A549 (cell line): ENCODE measurements at regions of chr3 and their contacts with region 1.

Region 1: GRCh38 chr3:146065573-146066006 is 95.4 kb downstream of the PLOD2 start:
- DNase-seq: peak in 1 of 2 experiments; percentile 73
- ATAC-seq: no peak
- H3K4me3 ChIP-seq: no peak overlapping the region
- H3K27ac ChIP-seq: no peak overlapping the region
- H3K4me1 ChIP-seq: peaks cover 29% of the 10 kb centered on the region
- CTCF ChIP-seq: peak; percentile 95
- EP300 ChIP-seq: no peak
- POLR2A ChIP-seq: no peak
- RAD21 ChIP-seq: peak; percentile 86 to 93

Region 2: DNA sequence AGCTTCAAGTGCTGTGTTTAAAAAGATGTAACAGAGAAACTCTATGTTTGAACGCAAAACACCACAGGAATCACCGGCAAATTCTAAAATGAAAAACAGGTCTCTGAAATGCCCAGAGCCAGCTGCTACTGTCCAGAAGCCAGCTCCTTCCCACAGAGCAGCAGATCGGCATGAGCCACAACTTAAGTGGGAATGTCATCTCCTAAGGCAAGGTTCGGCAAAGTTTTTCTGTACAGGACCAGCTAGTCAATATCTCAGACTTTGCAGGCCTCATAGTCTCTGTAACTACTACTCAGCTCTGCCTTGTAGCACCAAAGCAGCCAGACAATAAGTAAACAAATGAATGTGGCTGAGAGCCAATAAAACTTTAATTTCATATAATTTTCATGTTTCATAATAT is 90.5 kb after region 1 on chr3:
- CTCF ChIA-PET with region 1: interaction called, 34 read pairs
- POLR2A ChIA-PET with region 1: interaction called, 23 read pairs
- DNase-seq: no peak
- ATAC-seq: no peak
- H3K4me3 ChIP-seq: peak overlapping the region; percentile 90
- H3K27ac ChIP-seq: peak overlapping the region; percentile 45 to 72
- H3K4me1 ChIP-seq: peaks cover 74% of the 10 kb centered on the region
- CTCF ChIP-seq: no peak
- EP300 ChIP-seq: no peak
- POLR2A ChIP-seq: no peak
- RAD21 ChIP-seq: no peak

Region 3: DNA sequence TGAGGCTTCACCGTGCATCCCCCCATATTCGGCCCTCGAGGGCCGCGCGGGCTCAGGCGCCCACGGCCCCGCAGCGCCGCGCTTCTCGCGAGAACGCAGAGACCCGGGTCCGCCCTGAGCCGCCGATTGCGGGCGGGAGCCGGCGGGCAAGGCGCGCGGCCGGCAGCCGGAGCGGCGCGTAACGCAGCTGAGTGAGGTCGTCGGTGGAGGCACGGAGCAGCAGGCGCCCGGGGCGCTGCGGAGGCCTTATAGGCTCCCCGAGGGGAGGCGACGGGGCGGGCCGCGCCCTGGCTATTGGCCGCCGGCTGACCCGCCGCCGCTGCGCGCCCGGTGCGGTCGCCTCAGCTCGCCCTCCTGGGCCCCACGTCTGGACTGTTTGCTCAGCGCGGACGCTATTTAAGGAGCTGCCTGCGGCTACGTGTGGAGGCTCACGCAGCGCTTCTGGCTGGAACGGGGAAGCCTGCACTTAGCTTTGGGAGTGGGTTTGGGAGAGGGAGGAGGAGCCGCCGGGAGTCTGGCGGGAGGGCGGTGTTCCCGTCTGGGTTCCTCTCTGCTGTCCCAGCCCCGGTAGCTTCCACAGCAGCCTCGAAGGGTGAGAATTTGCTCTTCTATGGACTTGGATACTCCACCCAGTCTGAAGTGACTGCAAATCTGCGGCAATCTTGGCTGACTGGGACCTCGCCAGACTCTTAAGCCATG is 95.5 kb after region 1 on chr3 and contains the start of gene PLOD2:
- CTCF ChIA-PET with region 1: interaction called, 34 read pairs
- POLR2A ChIA-PET with region 1: interaction called, 23 read pairs
- DNase-seq: peak; percentile 56 to 89
- ATAC-seq: peak; percentile 75 to 76
- H3K4me3 ChIP-seq: peak within 1 kb of the TSS; percentile 90
- H3K27ac ChIP-seq: peak within 1 kb of the TSS; percentile 87 to 97
- H3K4me1 ChIP-seq: peaks cover 64% of the 10 kb centered on the region
- CTCF ChIP-seq: no peak; the same call in 2 of the 3 replicates
- EP300 ChIP-seq: peak in 1 of 2 experiments; percentile 20; a peak in 1 of 5 replicates
- POLR2A ChIP-seq: peak; percentile 86
- RAD21 ChIP-seq: no peak; a peak in 2 of 5 replicates
- polyA plus RNA-seq, gene PLOD2: 161 and 174 TPM in 2 replicates

Region 4: GRCh38 chr3:146166450-146167225 is 101.0 kb after region 1 on chr3:
- CTCF ChIA-PET with region 1: interaction called, 34 read pairs
- POLR2A ChIA-PET with region 1: interaction called, 3 read pairs
- DNase-seq: peak in 1 of 2 experiments; percentile 88
- ATAC-seq: peak; percentile 65
- H3K4me3 ChIP-seq: 0 out of 3 replicates have a peak overlapping the region, but pooled peaks have one; percentile 10
- H3K27ac ChIP-seq: peak overlapping the region; percentile 87 to 97
- H3K4me1 ChIP-seq: peaks cover 61% of the 10 kb centered on the region
- CTCF ChIP-seq: no peak
- EP300 ChIP-seq: peak; percentile 81 to 92; a peak in 3 of 5 replicates
- POLR2A ChIP-seq: no peak
- RAD21 ChIP-seq: peak; percentile 2 to 21; a peak in 1 of 5 replicates

Region 5: GRCh38 chr3:146177519-146177918 is 111.9 kb after region 1 on chr3:
- CTCF ChIA-PET with region 1: interaction called, 11 read pairs
- POLR2A ChIA-PET with region 1: no interaction called
- DNase-seq: no peak
- ATAC-seq: no peak
- H3K4me3 ChIP-seq: no peak overlapping the region
- H3K27ac ChIP-seq: peak overlapping the region in 1 of 2 experiments; percentile 28; a peak in 1 of 6 replicates
- H3K4me1 ChIP-seq: peaks cover 5% of the 10 kb centered on the region; the same call in 2 of the 3 replicates
- CTCF ChIP-seq: no peak
- EP300 ChIP-seq: no peak
- POLR2A ChIP-seq: no peak
- RAD21 ChIP-seq: no peak

Region 6: GRCh38 chr3:146184616-146185015 is 119.0 kb after region 1 on chr3:
- CTCF ChIA-PET with region 1: interaction called, 63 read pairs
- POLR2A ChIA-PET with region 1: interaction called, 9 read pairs
- DNase-seq: peak in 1 of 2 experiments; percentile 44
- ATAC-seq: peak in 1 of 2 experiments; percentile 41; a peak in 2 of 6 replicates
- H3K4me3 ChIP-seq: no peak overlapping the region
- H3K27ac ChIP-seq: peak overlapping the region in 1 of 2 experiments; percentile 33; a peak in 2 of 6 replicates
- H3K4me1 ChIP-seq: peaks cover 40% of the 10 kb centered on the region
- CTCF ChIP-seq: no peak
- EP300 ChIP-seq: no peak
- POLR2A ChIP-seq: no peak
- RAD21 ChIP-seq: no peak

Region 7: DNA sequence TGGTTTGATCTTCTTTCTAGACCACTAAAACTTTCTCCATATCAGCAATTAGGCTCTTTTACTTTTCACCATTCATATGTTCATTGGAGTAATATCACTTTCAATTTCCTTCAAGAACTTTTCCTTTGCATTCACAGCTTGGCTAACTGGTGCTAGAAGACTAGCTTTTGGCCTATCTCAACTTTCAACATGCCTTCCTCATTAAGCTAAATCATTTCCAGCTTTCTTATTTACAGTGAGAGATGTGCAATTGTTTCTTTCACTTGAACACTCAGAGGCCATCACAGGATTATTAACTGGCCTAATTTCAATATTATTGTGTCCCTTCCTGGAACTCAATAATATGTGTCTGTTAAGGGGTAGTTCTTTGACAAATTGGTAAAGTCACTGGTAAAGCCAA is 138.2 kb after region 1 on chr3:
- CTCF ChIA-PET with region 1: no interaction called
- POLR2A ChIA-PET with region 1: no interaction called
- DNase-seq: no peak
- ATAC-seq: no peak
- H3K4me3 ChIP-seq: no peak overlapping the region
- H3K27ac ChIP-seq: no peak overlapping the region
- H3K4me1 ChIP-seq: no peaks in the 10 kb centered on the region
- CTCF ChIP-seq: no peak
- EP300 ChIP-seq: no peak
- POLR2A ChIP-seq: no peak
- RAD21 ChIP-seq: no peak

Region 8: GRCh38 chr3:146326670-146327543 is 261.3 kb after region 1 on chr3:
- CTCF ChIA-PET with region 1: interaction called, 18 read pairs
- POLR2A ChIA-PET with region 1: no interaction called
- DNase-seq: peak; percentile 31 to 66
- ATAC-seq: peak; percentile 93
- H3K4me3 ChIP-seq: no peak overlapping the region
- H3K27ac ChIP-seq: peak overlapping the region; percentile 28 to 56; a peak in 4 of 6 replicates
- H3K4me1 ChIP-seq: no peaks in the 10 kb centered on the region
- CTCF ChIP-seq: peak; percentile 88
- EP300 ChIP-seq: no peak
- POLR2A ChIP-seq: no peak
- RAD21 ChIP-seq: peak; percentile 88 to 96